Calu3 (cell line): ENCODE measurements at regions of chr2 and their contacts with region 1.

Region 1: GRCh38 chr2:179264368-179265081 is at the start of gene SESTD1:
- DNase-seq: peak; percentile 84
- H3K4me3 Mint-ChIP-seq: peak within 1 kb of the TSS; percentile 99
- H3K27ac Mint-ChIP-seq: peak within 1 kb of the TSS; percentile 95
- H3K4me1 Mint-ChIP-seq: peaks cover 58% of the 10 kb centered on the region
- H3K27me3 Mint-ChIP-seq: no peaks in the 10 kb centered on the region
- CTCF ChIP-seq: no peak
- total RNA-seq, gene SESTD1: 135 and 145 TPM in 2 replicates

Region 2: GRCh38 chr2:179226203-179226960 is 38.1 kb before region 1 on chr2:
- CTCF ChIA-PET with region 1: no interaction called
- intact Hi-C with region 1: loop called (anchors 5 kb)
- DNase-seq: peak; percentile 23
- H3K4me3 Mint-ChIP-seq: no peak overlapping the region
- H3K27ac Mint-ChIP-seq: peak overlapping the region; percentile 27
- H3K4me1 Mint-ChIP-seq: peaks cover 51% of the 10 kb centered on the region
- H3K27me3 Mint-ChIP-seq: no peaks in the 10 kb centered on the region
- CTCF ChIP-seq: no peak

Region 3: DNA sequence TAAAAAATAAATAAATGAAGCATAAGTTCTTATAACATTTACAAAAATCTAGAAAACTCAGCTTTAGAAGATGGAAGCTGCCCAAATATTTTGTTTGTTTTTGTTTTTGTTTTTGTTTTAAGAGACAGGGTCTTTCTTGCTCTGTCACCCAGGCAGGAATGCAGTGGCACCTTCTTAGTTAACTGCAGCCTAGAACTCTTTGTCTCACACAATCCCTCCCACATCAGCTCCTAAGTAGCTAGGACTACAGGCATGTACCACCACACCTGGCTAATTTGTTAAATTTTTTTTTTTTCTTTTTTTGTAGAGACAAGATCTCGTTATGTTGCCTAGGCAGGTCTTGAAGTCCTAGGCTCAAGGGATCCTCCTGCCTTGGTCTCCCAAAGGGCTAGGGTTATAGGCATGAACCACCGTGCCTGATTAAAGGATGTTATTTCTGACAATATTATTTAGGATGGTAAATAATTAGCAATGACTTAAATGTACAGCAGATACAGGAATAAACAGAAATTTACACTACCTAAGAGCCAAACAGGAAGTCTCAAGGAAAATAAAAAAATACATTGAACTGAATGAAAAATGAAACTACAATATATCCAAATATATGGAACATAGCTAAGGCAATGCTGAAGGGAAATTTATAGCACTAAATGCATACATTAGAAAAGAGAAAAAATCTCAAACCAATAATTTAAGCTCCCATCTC is 17.1 kb before region 1 on chr2:
- CTCF ChIA-PET with region 1: interaction called, 7 read pairs
- intact Hi-C with region 1: loop called (anchors 1 kb)
- DNase-seq: no peak
- H3K4me3 Mint-ChIP-seq: peak overlapping the region; percentile 56
- H3K27ac Mint-ChIP-seq: peak overlapping the region; percentile 77
- H3K4me1 Mint-ChIP-seq: peaks cover 69% of the 10 kb centered on the region
- H3K27me3 Mint-ChIP-seq: no peaks in the 10 kb centered on the region
- CTCF ChIP-seq: no peak

Region 4: GRCh38 chr2:179951680-179952079 is 687.2 kb after region 1 on chr2:
- CTCF ChIA-PET with region 1: no interaction called
- intact Hi-C with region 1: no loop called
- DNase-seq: no peak
- H3K4me3 Mint-ChIP-seq: no peak overlapping the region
- H3K27ac Mint-ChIP-seq: no peak overlapping the region
- H3K4me1 Mint-ChIP-seq: no peaks in the 10 kb centered on the region
- H3K27me3 Mint-ChIP-seq: no peaks in the 10 kb centered on the region
- CTCF ChIP-seq: no peak